ENCODE measurements at regions of chr6 and their contacts with region 1.

Region 1: DNA sequence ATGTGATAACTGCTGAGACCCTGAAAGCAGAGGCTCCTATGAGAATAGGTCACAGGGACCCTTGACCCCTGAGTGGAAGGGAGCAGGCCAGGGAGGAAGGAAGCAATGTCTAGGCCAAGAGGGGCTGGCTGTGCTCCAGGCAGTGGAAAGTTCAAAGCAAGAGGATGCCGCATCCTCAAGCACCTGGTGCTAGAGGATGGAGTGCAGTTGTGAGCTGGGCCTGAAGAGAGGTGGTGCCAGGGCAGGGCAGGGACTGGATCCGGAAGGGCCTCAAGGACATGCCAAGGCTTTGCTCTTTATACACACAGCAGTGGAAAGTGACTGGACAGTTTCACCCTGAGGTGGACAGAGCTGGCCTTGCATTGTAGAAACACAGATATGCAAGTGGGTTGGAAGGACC is 97.0 kb downstream of the SLC22A3 start:
- DNase-seq: no peak
- H3K4me3 ChIP-seq: no peak overlapping the region
- H3K27ac ChIP-seq: no peak overlapping the region
- H3K4me1 ChIP-seq: no peaks in the 10 kb centered on the region
- H3K27me3 ChIP-seq: no peaks in the 10 kb centered on the region
- CTCF ChIP-seq: no peak
- EP300 ChIP-seq: no peak
- POLR2A ChIP-seq: no peak

Region 2: GRCh38 chr6:159919011-159919511 is 526.1 kb before region 1 on chr6:
- intact Hi-C with region 1: no loop called
- DNase-seq: no peak
- H3K4me3 ChIP-seq: no peak overlapping the region
- H3K27ac ChIP-seq: no peak overlapping the region
- H3K4me1 ChIP-seq: no peaks in the 10 kb centered on the region
- H3K27me3 ChIP-seq: no peaks in the 10 kb centered on the region
- CTCF ChIP-seq: no peak
- EP300 ChIP-seq: no peak
- POLR2A ChIP-seq: no peak

Region 3: DNA sequence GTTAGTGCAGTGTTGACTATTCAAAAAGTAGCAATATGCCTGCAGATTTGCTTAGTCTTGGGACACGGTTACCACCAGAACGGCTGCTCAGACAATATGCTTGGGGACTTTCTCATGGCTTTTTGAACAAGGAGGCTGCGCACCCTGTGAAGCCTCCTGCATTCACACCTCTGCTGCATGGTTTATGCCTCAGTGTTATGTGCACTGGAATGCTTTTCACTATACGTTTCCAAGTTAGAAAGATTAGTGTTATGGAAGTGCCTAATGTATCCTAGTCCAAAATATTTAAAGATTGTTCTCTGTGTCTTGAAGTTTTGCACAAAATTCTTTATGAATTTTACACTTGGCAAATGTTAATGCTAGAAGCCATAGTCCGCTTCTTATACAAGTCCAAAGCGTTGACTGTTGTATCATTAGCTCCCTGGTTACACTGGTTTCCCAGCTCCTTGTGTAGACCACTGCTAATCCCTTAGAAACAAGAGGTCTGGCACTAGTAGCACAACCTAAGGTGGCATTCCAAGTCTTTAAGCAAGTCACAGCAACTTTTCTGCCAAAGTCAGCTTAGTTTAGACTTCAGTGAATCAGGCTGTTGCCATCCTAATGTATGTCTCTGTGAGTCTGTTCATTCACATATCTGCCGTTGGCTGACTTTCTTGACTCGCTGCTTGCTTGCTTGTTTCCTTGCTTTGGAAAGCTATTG is 349.8 kb before region 1 on chr6:
- intact Hi-C with region 1: loop called in 1 of 4 experiments (anchors 5 kb)
- DNase-seq: no peak
- H3K4me3 ChIP-seq: no peak overlapping the region
- H3K27ac ChIP-seq: no peak overlapping the region
- H3K4me1 ChIP-seq: no peaks in the 10 kb centered on the region
- H3K27me3 ChIP-seq: no peaks in the 10 kb centered on the region
- CTCF ChIP-seq: no peak
- EP300 ChIP-seq: no peak
- POLR2A ChIP-seq: no peak

Region 4: GRCh38 chr6:161152907-161153662 is 708.0 kb after region 1 on chr6:
- intact Hi-C with region 1: no loop called
- DNase-seq: no peak
- H3K4me3 ChIP-seq: no peak overlapping the region
- H3K27ac ChIP-seq: no peak overlapping the region
- H3K4me1 ChIP-seq: no peaks in the 10 kb centered on the region
- H3K27me3 ChIP-seq: no peaks in the 10 kb centered on the region
- CTCF ChIP-seq: peak in 2 of 3 donors; percentile 14 to 17
- EP300 ChIP-seq: no peak
- POLR2A ChIP-seq: no peak

Measured in ovary (tissue), 10 donors.